B cell (primary cell): ENCODE measurements at regions of chr11 and their contacts with region 1.

Region 1: DNA sequence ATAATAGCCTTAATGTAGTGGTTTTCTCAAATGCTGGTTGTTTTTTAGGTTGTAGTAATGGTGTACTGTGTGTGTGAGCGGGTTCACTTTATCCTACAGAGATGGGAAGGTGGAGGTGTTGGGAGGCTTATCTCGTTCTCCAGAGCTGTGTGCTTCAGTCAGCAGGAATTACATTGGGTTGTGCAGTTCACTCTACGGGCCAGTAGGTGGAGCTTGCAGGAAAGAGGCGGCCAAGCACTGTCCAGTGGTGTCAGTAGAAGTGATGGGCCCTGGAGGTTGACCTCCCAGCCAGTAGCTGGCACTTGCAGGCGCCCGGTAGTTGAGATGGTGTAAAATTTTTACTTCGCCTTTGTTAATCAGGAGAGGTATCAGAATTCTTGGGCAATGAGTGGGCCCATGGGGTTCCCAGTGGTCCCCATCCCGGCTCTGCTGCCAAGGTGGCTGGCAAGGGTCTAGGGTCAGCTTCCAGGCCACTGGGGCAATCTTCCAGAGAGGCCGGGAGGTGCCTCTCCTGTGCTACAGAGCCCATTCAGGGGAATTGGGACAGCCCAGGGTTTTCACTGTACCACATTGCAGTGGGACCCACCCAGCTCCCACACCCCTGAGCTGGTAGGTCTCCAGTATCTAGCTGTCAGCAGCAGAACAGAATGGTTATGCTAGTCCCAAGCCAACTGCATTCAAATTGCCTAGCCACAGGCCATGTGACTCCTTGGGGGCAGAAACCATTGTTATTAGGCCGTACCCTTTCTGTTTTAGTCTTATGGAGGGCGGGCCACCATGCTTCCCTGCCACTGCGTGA is 43.9 kb downstream of the BIRC2 start:
- DNase-seq: peak; percentile 74
- ATAC-seq: peak; percentile 88
- H3K4me3 ChIP-seq: no peak overlapping the region
- H3K4me3 Mint-ChIP-seq: no peak overlapping the region
- H3K27ac ChIP-seq: no peak overlapping the region
- H3K27ac Mint-ChIP-seq: peak overlapping the region; percentile 46
- H3K4me1 ChIP-seq: no peaks in the 10 kb centered on the region
- H3K4me1 Mint-ChIP-seq: peaks cover 15% of the 10 kb centered on the region
- H3K27me3 ChIP-seq: no peaks in the 10 kb centered on the region
- H3K27me3 Mint-ChIP-seq: no peaks in the 10 kb centered on the region
- CTCF ChIP-seq: peak; percentile 90

Region 2: GRCh38 chr11:102346748-102347461 is 44.0 kb before region 1 on chr11 and contains the start of gene BIRC2:
- CTCF ChIA-PET with region 1: interaction called, 14 read pairs
- POLR2A ChIA-PET with region 1: interaction called, 7 read pairs
- intact Hi-C with region 1: loop called (anchors 2 kb)
- DNase-seq: peak; percentile 98
- ATAC-seq: peak; percentile 88
- H3K4me3 ChIP-seq: peak within 1 kb of the TSS; percentile 63 to 98 (median 92)
- H3K4me3 Mint-ChIP-seq: peak within 1 kb of the TSS; percentile 90
- H3K27ac ChIP-seq: peak within 1 kb of the TSS; percentile 94 to 97
- H3K27ac Mint-ChIP-seq: peak within 1 kb of the TSS; percentile 98
- H3K4me1 ChIP-seq: peaks cover 14 to 21% of the 10 kb centered on the region in 2 donors
- H3K4me1 Mint-ChIP-seq: peaks cover 36% of the 10 kb centered on the region
- H3K27me3 ChIP-seq: no peaks in the 10 kb centered on the region
- H3K27me3 Mint-ChIP-seq: no peaks in the 10 kb centered on the region
- CTCF ChIP-seq: peak; percentile 73
- total RNA-seq, gene BIRC2: 46.7 and 51.0 TPM in 2 replicates

Region 3: DNA sequence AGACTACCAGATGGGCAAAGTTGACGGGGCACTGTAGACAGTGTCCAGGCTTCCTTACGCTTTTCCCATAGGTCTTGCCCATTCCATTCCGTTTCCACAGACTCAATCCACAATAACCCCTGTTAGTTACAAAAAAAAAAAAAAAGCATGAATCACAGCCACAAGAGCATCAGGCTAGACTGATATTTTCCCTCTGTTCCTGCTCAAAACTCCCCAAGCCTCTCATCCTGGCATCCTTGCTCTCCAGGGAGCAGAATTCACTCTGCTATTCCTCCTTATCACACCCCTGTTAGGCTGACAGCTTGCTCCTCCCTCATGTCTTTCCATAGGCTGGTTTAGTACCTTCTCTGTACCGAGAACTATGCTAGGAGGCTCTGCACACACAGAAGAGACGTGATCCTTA is 19.5 kb after region 1 on chr11:
- CTCF ChIA-PET with region 1: interaction called, 10 read pairs
- POLR2A ChIA-PET with region 1: interaction called, 3 read pairs
- intact Hi-C with region 1: no loop called
- DNase-seq: no peak
- ATAC-seq: no peak
- H3K4me3 ChIP-seq: no peak overlapping the region
- H3K4me3 Mint-ChIP-seq: no peak overlapping the region
- H3K27ac ChIP-seq: no peak overlapping the region
- H3K27ac Mint-ChIP-seq: no peak overlapping the region
- H3K4me1 ChIP-seq: peaks cover 6% of the 10 kb centered on the region in 2 donors
- H3K4me1 Mint-ChIP-seq: peaks cover 46% of the 10 kb centered on the region
- H3K27me3 ChIP-seq: no peaks in the 10 kb centered on the region
- H3K27me3 Mint-ChIP-seq: no peaks in the 10 kb centered on the region
- CTCF ChIP-seq: no peak

Region 4: GRCh38 chr11:102476812-102477211 is 85.9 kb after region 1 on chr11:
- CTCF ChIA-PET with region 1: interaction called, 21 read pairs
- POLR2A ChIA-PET with region 1: no interaction called
- intact Hi-C with region 1: no loop called
- DNase-seq: no peak
- ATAC-seq: no peak
- H3K4me3 ChIP-seq: no peak overlapping the region
- H3K4me3 Mint-ChIP-seq: peak overlapping the region; percentile 69
- H3K27ac ChIP-seq: no peak overlapping the region
- H3K27ac Mint-ChIP-seq: peak overlapping the region; percentile 76
- H3K4me1 ChIP-seq: peaks cover 28% of the 10 kb centered on the region in 2 donors
- H3K4me1 Mint-ChIP-seq: peaks cover 42% of the 10 kb centered on the region
- H3K27me3 ChIP-seq: peaks cover 0 to 3% (median 0%) of the 10 kb centered on the region in 4 experiments
- H3K27me3 Mint-ChIP-seq: peaks cover 7% of the 10 kb centered on the region
- CTCF ChIP-seq: no peak

Region 5: DNA sequence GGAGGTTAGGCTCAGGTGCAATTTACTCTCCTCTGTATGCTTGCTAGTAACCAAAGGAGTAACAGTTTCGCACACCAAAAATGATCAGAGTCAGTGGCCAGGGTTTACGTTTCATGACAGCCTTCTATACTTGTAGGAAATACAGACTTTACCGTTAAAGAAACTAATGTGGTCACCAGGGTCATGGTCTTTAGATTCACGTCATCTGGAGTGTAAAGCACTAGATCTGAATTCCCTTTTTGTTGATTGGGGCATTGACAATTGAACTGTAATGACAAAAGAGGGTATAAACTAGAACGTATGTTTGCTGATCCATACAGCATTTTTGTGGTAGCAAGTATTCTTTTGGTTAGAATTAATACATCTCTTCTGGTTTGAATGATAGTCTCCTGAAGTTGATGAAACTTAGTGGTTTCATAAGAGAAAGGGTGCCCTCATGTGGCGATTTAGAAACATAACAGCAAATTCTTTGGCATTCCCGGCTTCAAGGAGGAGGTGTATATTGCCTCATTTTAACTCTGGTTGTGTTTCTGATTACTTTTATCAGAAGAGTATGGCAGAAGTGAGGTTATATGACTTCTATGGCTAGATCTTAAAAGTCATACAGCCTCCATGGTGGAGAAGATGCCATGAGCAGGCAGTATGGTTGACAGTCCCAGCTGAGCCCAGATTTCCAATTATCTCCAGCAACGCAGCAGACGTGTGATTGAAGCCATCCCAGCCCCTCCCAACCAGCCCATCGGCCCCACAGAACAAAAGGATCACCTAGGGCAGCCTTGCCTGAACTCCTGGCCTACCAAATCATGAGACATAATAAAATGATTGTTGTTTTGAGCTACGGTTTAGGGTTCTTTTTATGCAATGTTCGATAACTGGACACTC is 104.5 kb after region 1 on chr11:
- CTCF ChIA-PET with region 1: interaction called, 99 read pairs
- POLR2A ChIA-PET with region 1: no interaction called
- intact Hi-C with region 1: loop called (anchors 1 kb)
- DNase-seq: peak; percentile 86
- ATAC-seq: peak; percentile 73
- H3K4me3 ChIP-seq: no peak overlapping the region
- H3K4me3 Mint-ChIP-seq: peak overlapping the region; percentile 55
- H3K27ac ChIP-seq: no peak overlapping the region
- H3K27ac Mint-ChIP-seq: peak overlapping the region; percentile 50
- H3K4me1 ChIP-seq: peaks cover 0 to 7% of the 10 kb centered on the region in 2 donors
- H3K4me1 Mint-ChIP-seq: peaks cover 14% of the 10 kb centered on the region
- H3K27me3 ChIP-seq: no peaks in the 10 kb centered on the region
- H3K27me3 Mint-ChIP-seq: no peaks in the 10 kb centered on the region
- CTCF ChIP-seq: peak; percentile 81

Region 6: DNA sequence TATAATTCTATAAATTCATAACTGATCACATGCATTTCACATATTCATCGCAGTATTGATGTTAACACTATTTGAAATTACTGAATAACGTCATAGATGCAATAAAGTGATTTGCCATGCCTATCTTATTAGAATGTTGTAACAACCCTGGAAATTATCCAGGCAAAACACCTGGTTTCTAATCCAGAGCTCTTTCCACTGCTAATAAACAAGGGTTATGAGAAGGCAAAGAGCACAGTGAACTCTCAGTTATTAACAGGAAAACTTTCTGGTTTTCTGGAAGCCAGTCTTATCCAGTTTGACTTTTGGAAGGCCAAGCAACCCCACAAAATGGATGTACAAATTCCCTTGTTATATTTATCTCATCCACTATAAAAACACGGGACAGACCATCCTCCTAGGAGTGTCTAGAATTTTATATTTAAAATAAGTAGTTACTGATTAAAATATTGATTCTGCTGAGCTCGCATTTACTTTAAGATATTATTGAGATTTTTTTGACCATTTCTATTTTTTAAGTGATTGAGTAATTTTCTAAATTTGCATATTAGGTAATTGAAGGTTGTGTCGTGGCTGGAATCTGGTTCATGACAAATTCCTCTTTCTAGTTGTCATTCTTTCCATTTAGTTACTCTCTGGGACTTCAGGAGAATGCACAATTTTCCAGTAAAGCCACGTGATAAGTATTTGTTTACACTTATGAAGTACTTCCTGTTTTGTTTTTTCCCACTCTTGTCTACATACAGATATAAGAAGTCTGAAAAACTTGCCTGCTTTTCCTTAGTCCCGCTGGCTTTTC is 653.2 kb after region 1 on chr11:
- CTCF ChIA-PET with region 1: no interaction called
- POLR2A ChIA-PET with region 1: no interaction called
- intact Hi-C with region 1: no loop called
- DNase-seq: no peak
- ATAC-seq: no peak
- H3K4me3 ChIP-seq: no peak overlapping the region
- H3K4me3 Mint-ChIP-seq: no peak overlapping the region
- H3K27ac ChIP-seq: no peak overlapping the region
- H3K27ac Mint-ChIP-seq: no peak overlapping the region
- H3K4me1 ChIP-seq: no peaks in the 10 kb centered on the region
- H3K4me1 Mint-ChIP-seq: no peaks in the 10 kb centered on the region
- H3K27me3 ChIP-seq: peaks cover 0 to 4% (median 3%) of the 10 kb centered on the region in 4 experiments
- H3K27me3 Mint-ChIP-seq: peaks cover 18% of the 10 kb centered on the region
- CTCF ChIP-seq: no peak